Activated CD4-positive, alpha-beta T cell treated with anti-CD3 and anti-CD28 coated beads, Interleukin-2, amount 10 ng/mL, durations not matched to agents 24 days and 14 days (primary cell): ENCODE measurements at regions of chr6 and their contacts with region 1.

Region 1: GRCh38 chr6:20919677-20920385 is 385.6 kb downstream of the CDKAL1 start:
- DNase-seq: no peak
- H3K4me3 Mint-ChIP-seq: no peak overlapping the region
- H3K27ac Mint-ChIP-seq: peak overlapping the region; percentile 68
- H3K4me1 Mint-ChIP-seq: peaks cover 19% of the 10 kb centered on the region
- H3K27me3 Mint-ChIP-seq: no peaks in the 10 kb centered on the region

Region 2: DNA sequence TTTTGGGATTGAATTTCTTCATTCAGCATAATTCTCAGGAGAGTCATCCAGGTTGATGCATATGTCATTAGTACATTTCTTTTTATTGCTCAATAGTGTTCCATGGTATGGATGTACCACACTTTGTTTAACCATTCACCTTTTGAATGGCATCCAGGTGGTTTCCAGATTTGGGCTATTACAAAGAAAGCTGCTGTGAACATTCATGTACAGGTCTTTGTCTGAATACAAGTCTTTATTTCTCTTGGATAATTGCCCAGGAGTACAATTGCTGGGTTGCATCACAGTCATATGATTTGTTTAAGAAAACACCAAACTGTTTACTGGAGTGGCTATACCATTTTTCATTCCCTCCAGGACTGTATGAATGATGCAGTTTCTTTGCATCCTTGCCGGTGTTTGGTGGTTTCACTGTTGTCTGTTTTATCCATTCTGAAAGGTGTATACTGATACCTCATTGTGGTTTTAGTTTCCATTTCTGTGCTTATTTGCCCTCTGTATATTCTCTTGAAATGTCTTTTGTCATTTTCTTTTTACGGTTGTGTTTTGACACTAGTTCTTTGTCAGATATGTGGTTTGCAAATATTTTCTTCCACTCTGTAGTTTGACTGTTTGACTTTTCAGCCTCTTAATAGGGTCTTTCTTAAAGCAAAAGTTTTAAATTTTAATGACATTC is 376.8 kb before region 1 on chr6:
- intact Hi-C with region 1: loop called (anchors 1 kb)
- DNase-seq: peak; percentile 82
- H3K4me3 Mint-ChIP-seq: peak overlapping the region; percentile 38
- H3K27ac Mint-ChIP-seq: peak overlapping the region; percentile 88
- H3K4me1 Mint-ChIP-seq: peaks cover 43% of the 10 kb centered on the region
- H3K27me3 Mint-ChIP-seq: no peaks in the 10 kb centered on the region

Region 3: GRCh38 chr6:20708367-20709124 is 211.3 kb before region 1 on chr6:
- intact Hi-C with region 1: loop called (anchors 10 kb)
- DNase-seq: no peak
- H3K4me3 Mint-ChIP-seq: no peak overlapping the region
- H3K27ac Mint-ChIP-seq: no peak overlapping the region
- H3K4me1 Mint-ChIP-seq: peaks cover 25% of the 10 kb centered on the region
- H3K27me3 Mint-ChIP-seq: no peaks in the 10 kb centered on the region

Region 4: GRCh38 chr6:20840671-20841265 is 79.1 kb before region 1 on chr6:
- intact Hi-C with region 1: no loop called
- DNase-seq: no peak
- H3K4me3 Mint-ChIP-seq: no peak overlapping the region
- H3K27ac Mint-ChIP-seq: no peak overlapping the region
- H3K4me1 Mint-ChIP-seq: peaks cover 29% of the 10 kb centered on the region
- H3K27me3 Mint-ChIP-seq: no peaks in the 10 kb centered on the region

Region 5: GRCh38 chr6:20877008-20877937 is 42.6 kb before region 1 on chr6:
- intact Hi-C with region 1: loop called (anchors 2 kb)
- DNase-seq: peak; percentile 60
- H3K4me3 Mint-ChIP-seq: no peak overlapping the region
- H3K27ac Mint-ChIP-seq: peak overlapping the region; percentile 42
- H3K4me1 Mint-ChIP-seq: peaks cover 13% of the 10 kb centered on the region
- H3K27me3 Mint-ChIP-seq: no peaks in the 10 kb centered on the region

Region 6: GRCh38 chr6:21157186-21157929 is 237.5 kb after region 1 on chr6:
- intact Hi-C with region 1: loop called (anchors 10 kb)
- DNase-seq: no peak
- H3K4me3 Mint-ChIP-seq: no peak overlapping the region
- H3K27ac Mint-ChIP-seq: no peak overlapping the region
- H3K4me1 Mint-ChIP-seq: peaks cover 8% of the 10 kb centered on the region
- H3K27me3 Mint-ChIP-seq: no peaks in the 10 kb centered on the region